ENCODE measurements at regions of chr12 and their contacts with region 1.

Region 1: GRCh38 chr12:4526923-4527546 is 11.7 kb upstream of the RAD51AP1 start:
- DNase-seq: no peak
- ATAC-seq: no peak
- H3K4me3 ChIP-seq: no peak overlapping the region
- H3K27ac ChIP-seq: no peak overlapping the region
- H3K4me1 ChIP-seq: no peaks in the 10 kb centered on the region
- H3K27me3 ChIP-seq: no peaks in the 10 kb centered on the region
- CTCF ChIP-seq: peak in 2 of 3 experiments; percentile 12 to 45; a peak in 1 of 6 replicates
- EP300 ChIP-seq: no peak
- POLR2A ChIP-seq: no peak
- RAD21 ChIP-seq: peak; percentile 36 to 48; a peak in 3 of 4 replicates

Region 2: DNA sequence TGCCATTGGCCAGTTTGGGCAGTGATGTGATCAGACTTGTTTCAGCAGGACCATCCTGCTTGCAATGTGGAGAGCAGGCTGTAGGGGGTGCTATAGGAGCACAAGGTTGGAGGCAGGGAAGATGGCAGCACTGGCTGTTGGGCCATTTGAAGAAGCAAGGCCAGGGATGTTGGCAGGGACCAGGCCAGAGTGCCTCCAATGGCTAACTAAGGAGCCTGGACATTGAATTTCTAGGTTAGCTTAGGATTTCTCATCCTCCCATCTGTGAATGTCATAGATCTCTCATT is 171.1 kb before region 1 on chr12:
- CTCF ChIA-PET with region 1: interaction called, 4 read pairs
- POLR2A ChIA-PET with region 1: no interaction called
- in situ Hi-C with region 1: no loop called
- intact Hi-C with region 1: loop called (anchors 5 kb)
- DNase-seq: peak; percentile 33 to 78 (median 60)
- ATAC-seq: peak; percentile 84
- H3K4me3 ChIP-seq: no peak overlapping the region
- H3K27ac ChIP-seq: no peak overlapping the region
- H3K4me1 ChIP-seq: no peaks in the 10 kb centered on the region
- H3K27me3 ChIP-seq: no peaks in the 10 kb centered on the region
- CTCF ChIP-seq: peak; percentile 78 to 83 (median 80)
- EP300 ChIP-seq: no peak
- POLR2A ChIP-seq: no peak
- RAD21 ChIP-seq: peak; percentile 44 to 80

Region 3: DNA sequence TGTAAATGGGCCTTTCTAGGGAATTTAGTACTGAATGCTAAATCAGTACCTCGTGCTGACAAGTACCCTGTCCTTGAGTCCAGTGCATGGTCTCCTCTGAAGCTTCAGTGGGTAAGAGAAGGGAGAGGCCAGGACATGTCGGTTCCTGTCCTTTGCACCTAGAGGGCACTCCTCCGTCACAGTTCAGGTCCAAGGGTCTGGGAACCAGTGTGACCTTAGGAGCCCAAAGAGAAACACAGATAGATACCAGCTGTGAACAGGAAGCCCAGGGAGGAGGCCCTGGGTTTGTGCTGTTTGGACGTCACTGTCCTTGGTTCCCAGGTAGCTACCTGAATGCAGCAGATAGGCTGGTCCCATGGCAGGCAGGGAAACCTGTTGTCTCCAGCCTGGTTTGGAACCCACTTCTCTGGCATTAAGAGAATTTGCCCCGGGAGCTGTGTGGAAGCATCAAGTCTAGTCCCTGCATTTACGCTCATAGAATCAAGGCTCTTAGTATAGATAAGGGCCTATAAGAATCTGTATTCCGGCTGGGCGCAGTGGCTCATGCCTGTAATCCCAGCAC is 143.7 kb before region 1 on chr12:
- CTCF ChIA-PET with region 1: interaction called, 4 read pairs
- POLR2A ChIA-PET with region 1: no interaction called
- in situ Hi-C with region 1: no loop called
- intact Hi-C with region 1: loop called (anchors 5 kb)
- DNase-seq: peak; percentile 18 to 72 (median 46)
- ATAC-seq: peak; percentile 95
- H3K4me3 ChIP-seq: no peak overlapping the region
- H3K27ac ChIP-seq: no peak overlapping the region
- H3K4me1 ChIP-seq: peaks cover 4 to 7% of the 10 kb centered on the region in 2 experiments; a peak in 4 of 5 replicates
- H3K27me3 ChIP-seq: peaks cover 2 to 14% of the 10 kb centered on the region in 2 experiments; a peak in 3 of 5 replicates
- CTCF ChIP-seq: peak; percentile 63 to 68 (median 65)
- EP300 ChIP-seq: no peak
- POLR2A ChIP-seq: no peak
- RAD21 ChIP-seq: peak; percentile 58 to 86

Measured in K562 (cell line).